Activated T-helper 2 cell treated with anti-CD3 and anti-CD28 coated beads, Interferon-gamma antibody, Interleukin-2, Interleukin-4, amounts not matched to agents 10 μg/mL and 5 μg/mL and 100 μg/mL, durations not matched to agents 14 hours and 24 hours and 36 hours (primary cell): ENCODE measurements at regions of chr1 and their contacts with region 1.

Region 1: GRCh38 chr1:13748610-13749505 is 48.9 kb downstream of the PRDM2 start:
- DNase-seq: peak; percentile 92
- H3K4me3 Mint-ChIP-seq: peak overlapping the region; percentile 88
- H3K27ac Mint-ChIP-seq: peak overlapping the region; percentile 92
- H3K4me1 Mint-ChIP-seq: peaks cover 39% of the 10 kb centered on the region
- H3K27me3 Mint-ChIP-seq: no peaks in the 10 kb centered on the region

Region 2: GRCh38 chr1:13699936-13700520 is 48.8 kb before region 1 on chr1 and contains the start of gene PRDM2:
- intact Hi-C with region 1: loop called (anchors 1 kb)
- DNase-seq: peak; percentile 53
- H3K4me3 Mint-ChIP-seq: peak within 1 kb of the TSS; percentile 94
- H3K27ac Mint-ChIP-seq: peak within 1 kb of the TSS; percentile 96
- H3K4me1 Mint-ChIP-seq: peaks cover 38% of the 10 kb centered on the region
- H3K27me3 Mint-ChIP-seq: peaks cover 8% of the 10 kb centered on the region
- total RNA-seq, gene PRDM2: 45.0 and 47.3 TPM in 2 replicates

Region 3: DNA sequence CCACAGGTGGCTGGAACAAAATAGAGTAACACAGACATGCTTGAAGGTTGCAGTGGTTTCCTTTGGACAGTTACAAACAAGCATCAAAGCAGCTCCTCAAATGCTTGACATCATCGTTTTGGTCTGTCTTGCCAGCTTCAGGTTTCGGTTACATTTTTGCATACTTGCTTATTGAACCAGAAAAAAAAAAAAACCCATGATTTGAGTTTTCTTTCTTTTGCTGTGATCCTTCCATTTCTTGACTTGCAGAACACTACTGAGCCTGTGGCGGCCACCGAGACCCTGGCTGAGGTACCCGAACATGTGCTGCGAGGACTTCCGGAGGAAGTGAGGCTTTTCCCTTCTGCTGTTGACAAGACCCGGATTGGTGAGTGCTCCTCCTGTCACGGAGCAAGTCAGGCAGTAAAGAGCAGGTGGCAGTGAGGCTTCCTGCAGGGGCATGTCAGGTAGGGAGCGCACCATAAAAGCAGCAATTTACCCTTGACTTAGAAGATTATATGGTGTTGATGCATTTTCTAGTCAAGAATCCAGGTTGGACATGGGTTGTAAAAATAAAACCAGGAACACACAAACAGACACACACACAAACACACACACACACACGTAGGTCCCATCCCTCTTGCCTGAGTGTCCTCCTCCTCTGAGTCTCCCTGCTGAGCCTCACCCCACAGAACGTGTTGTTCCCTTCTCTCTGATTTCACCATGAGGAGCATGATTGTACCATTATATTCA is 17.9 kb before region 1 on chr1:
- intact Hi-C with region 1: loop called (anchors 1 kb)
- DNase-seq: peak; percentile 82
- H3K4me3 Mint-ChIP-seq: peak overlapping the region; percentile 79
- H3K27ac Mint-ChIP-seq: peak overlapping the region; percentile 99
- H3K4me1 Mint-ChIP-seq: peaks cover 52% of the 10 kb centered on the region
- H3K27me3 Mint-ChIP-seq: no peaks in the 10 kb centered on the region